Activated CD4-positive, alpha-beta T cell treated with anti-CD3 and anti-CD28 coated beads for 36 hours (primary cell): ENCODE measurements at regions of chr7 and their contacts with region 1.

Region 1: DNA sequence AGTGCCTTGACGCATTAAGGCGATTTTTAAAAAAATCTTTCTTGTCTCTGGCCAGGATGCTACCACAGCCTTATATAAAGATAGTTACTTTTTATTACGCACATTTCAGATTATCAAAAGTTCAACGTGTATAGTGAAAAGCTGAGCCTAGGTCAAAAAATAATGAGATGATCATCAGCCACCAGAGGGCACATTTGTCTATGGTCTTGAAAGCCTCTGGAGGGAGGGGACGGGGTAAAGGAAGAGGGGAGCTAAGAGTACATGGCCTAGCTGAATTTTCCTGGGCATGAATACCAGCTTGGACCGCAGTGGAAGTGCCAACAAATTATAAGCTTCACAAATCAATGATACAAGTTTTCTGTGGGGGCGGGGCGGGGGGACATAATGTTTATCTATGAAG is 285.9 kb upstream of the SMIM30 start:
- DNase-seq: no peak
- ATAC-seq: no peak
- H3K4me3 Mint-ChIP-seq: no peak overlapping the region
- H3K27ac Mint-ChIP-seq: no peak overlapping the region
- H3K4me1 Mint-ChIP-seq: no peaks in the 10 kb centered on the region
- H3K27me3 Mint-ChIP-seq: peaks cover 16% of the 10 kb centered on the region

Region 2: DNA sequence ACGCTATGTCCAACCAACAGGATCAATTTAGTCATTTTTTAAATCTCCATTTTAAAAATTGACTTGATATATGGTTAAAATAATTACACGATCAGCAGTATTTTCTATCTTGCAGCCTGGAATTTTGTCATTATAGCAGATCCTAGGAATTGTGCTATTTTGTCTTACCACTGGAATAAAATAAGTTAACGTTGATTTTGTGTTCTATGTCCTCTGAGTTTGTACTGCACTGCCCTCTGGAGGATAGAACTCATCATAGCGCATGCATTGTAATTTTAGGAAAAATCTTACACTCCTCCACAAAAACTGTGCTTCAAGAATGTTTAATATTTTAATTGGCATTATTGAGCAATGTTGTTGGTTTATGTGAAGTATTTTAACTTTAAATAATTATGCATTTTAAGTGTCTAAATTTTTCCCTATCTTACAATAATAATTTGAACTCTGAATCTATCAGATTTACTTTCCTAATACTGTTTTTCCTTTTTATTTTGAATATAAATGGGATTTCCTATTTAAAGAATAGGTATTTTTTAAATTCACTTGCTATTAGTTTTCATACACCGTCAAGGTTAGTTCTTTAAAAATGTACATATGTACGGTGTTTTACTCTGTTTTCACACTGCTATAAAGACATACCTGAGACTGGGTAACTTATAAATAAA is 294.4 kb after region 1 on chr7:
- CTCF ChIA-PET with region 1: no interaction called
- POLR2A ChIA-PET with region 1: no interaction called
- intact Hi-C with region 1: loop called in 1 of 2 experiments (anchors 5 kb)
- DNase-seq: no peak
- ATAC-seq: no peak
- H3K4me3 Mint-ChIP-seq: no peak overlapping the region
- H3K27ac Mint-ChIP-seq: no peak overlapping the region
- H3K4me1 Mint-ChIP-seq: no peaks in the 10 kb centered on the region
- H3K27me3 Mint-ChIP-seq: no peaks in the 10 kb centered on the region